ENCODE measurements at regions of chr12 and their contacts with region 1.

Region 1: GRCh38 chr12:96061864-96062453 is 26.6 kb upstream of the LTA4H start:
- DNase-seq: peak; percentile 81 to 90 (median 85)
- H3K4me3 ChIP-seq: no peak overlapping the region
- H3K4me3 Mint-ChIP-seq: no peak overlapping the region
- H3K27ac ChIP-seq: peak overlapping the region in 1 of 2 donors; percentile 39
- H3K27ac Mint-ChIP-seq: peak overlapping the region; percentile 19 to 82 (median 75)
- H3K4me1 ChIP-seq: peaks cover 23 to 33% of the 10 kb centered on the region in 2 donors
- H3K4me1 Mint-ChIP-seq: peaks cover 32% of the 10 kb centered on the region
- H3K27me3 ChIP-seq: no peaks in the 10 kb centered on the region
- H3K27me3 Mint-ChIP-seq: no peaks in the 10 kb centered on the region
- CTCF ChIP-seq: peak; percentile 91

Region 2: DNA sequence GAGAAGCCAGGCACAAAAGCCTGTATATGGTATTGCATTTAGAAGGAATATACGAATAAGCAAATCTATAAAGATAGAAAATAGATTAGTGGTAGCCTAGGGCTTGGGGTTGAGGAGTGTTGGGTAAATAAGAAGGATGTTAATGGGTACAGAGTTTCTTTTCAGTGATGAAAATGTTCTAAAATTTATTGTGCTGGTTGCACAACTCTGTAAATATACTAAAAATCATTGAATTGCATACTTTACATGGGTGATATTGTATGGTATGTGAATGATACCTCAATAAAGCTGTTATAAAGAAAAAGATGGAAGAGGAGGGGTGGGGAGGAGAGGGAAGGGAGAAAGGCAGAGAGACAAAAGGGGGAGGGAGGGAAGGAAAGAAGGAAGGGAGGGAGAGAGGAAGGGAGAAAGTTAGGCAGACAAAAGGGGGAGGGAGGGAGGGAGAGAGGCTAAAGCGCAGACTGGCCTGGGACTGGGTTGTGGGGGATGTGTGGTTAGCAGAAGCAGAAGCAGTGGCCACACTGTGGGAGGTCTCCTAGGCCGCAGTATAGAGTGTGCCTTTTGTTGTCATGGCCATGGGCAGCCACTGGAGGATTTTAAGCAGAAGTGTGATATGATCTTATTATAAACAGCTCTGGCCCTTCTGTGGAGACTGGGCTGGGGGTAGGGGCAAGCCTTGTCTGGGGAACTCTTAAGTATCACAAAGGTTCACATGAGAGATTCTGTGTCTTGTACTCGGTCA is 58.6 kb after region 1 on chr12:
- intact Hi-C with region 1: loop called in 1 of 2 experiments (anchors 5 kb)
- DNase-seq: peak; percentile 64 to 74 (median 74)
- H3K4me3 ChIP-seq: peak overlapping the region in 1 of 3 experiments; percentile 67
- H3K4me3 Mint-ChIP-seq: peak overlapping the region; percentile 65 to 68
- H3K27ac ChIP-seq: peak overlapping the region; percentile 72 to 93
- H3K27ac Mint-ChIP-seq: peak overlapping the region; percentile 93 to 99 (median 97)
- H3K4me1 ChIP-seq: peaks cover 20 to 27% of the 10 kb centered on the region in 2 donors
- H3K4me1 Mint-ChIP-seq: peaks cover 33% of the 10 kb centered on the region
- H3K27me3 ChIP-seq: no peaks in the 10 kb centered on the region
- H3K27me3 Mint-ChIP-seq: peaks cover 0 to 1% (median 0%) of the 10 kb centered on the region in 3 donors
- CTCF ChIP-seq: peak; percentile 39

Region 3: DNA sequence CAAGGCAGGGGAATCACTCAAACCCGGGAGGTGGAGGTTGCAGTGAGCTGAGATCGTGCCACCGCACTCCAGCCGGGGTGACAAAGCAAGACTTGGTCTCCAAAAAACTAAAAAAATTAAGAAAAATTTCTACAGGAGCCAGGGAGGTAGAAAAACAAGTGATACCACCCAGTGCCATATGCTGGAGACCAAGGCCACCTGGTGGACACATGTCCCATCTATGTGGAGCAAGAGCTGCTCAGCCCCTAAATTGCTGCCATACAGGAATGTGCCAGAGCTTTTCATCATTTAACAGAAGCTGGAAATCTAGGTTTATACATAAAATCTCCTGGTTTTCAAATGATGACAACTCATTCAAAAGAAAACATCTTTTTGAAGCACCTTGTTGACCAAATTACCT is 70.9 kb after region 1 on chr12:
- intact Hi-C with region 1: loop called in 1 of 2 experiments (anchors 5 kb)
- DNase-seq: peak; percentile 18 to 41 (median 23)
- H3K4me3 ChIP-seq: no peak overlapping the region
- H3K4me3 Mint-ChIP-seq: no peak overlapping the region
- H3K27ac ChIP-seq: no peak overlapping the region
- H3K27ac Mint-ChIP-seq: no peak overlapping the region
- H3K4me1 ChIP-seq: peaks cover 15 to 21% of the 10 kb centered on the region in 2 donors
- H3K4me1 Mint-ChIP-seq: peaks cover 32% of the 10 kb centered on the region
- H3K27me3 ChIP-seq: no peaks in the 10 kb centered on the region
- H3K27me3 Mint-ChIP-seq: peaks cover 0 to 5% (median 0%) of the 10 kb centered on the region in 3 donors
- CTCF ChIP-seq: peak; percentile 58

Region 4: DNA sequence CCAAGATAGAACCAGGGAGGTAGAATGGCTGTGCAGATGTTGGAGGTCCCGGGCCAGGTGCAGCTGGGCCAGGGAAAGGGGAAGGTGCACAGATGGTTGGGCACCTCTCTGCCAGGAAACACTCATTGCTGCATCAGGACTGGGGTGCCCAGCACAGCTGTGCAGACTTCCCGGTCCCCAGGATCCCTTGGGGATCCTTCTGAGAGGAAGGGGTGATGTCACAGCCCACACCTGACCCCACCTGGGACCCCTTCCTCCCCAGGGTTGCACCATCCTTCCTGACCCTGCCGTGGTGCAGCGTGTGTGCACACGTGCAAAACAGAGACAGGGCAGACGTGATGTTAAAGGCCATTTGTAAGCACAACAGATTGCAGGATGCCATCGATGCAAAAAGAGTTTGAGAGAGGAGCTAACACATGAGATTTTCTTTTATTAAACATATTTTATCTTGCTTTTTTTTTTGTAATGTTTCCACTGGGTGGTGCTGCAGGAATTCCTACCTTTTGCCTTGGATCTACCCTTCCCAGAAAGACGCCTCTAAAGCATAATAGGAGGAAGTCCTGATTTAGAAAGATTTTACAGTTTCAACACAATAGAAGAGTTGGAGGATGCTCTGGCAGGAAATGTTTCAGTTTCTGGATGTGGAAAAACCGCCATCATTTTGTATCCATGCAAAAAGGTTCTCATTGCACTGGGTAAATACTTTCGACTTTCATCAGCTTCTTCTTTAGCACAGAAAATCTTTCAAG is 147.0 kb after region 1 on chr12:
- intact Hi-C with region 1: loop called in 1 of 2 experiments (anchors 5 kb)
- DNase-seq: no peak
- H3K4me3 ChIP-seq: no peak overlapping the region
- H3K4me3 Mint-ChIP-seq: peak overlapping the region in 1 of 2 donors; percentile 73
- H3K27ac ChIP-seq: peak overlapping the region in 1 of 2 donors; percentile 50
- H3K27ac Mint-ChIP-seq: peak overlapping the region in 5 of 7 donors; percentile 2 to 77 (median 52)
- H3K4me1 ChIP-seq: peaks cover 37 to 51% of the 10 kb centered on the region in 2 donors
- H3K4me1 Mint-ChIP-seq: peaks cover 75% of the 10 kb centered on the region
- H3K27me3 ChIP-seq: no peaks in the 10 kb centered on the region
- H3K27me3 Mint-ChIP-seq: no peaks in the 10 kb centered on the region
- CTCF ChIP-seq: no peak

Region 5: DNA sequence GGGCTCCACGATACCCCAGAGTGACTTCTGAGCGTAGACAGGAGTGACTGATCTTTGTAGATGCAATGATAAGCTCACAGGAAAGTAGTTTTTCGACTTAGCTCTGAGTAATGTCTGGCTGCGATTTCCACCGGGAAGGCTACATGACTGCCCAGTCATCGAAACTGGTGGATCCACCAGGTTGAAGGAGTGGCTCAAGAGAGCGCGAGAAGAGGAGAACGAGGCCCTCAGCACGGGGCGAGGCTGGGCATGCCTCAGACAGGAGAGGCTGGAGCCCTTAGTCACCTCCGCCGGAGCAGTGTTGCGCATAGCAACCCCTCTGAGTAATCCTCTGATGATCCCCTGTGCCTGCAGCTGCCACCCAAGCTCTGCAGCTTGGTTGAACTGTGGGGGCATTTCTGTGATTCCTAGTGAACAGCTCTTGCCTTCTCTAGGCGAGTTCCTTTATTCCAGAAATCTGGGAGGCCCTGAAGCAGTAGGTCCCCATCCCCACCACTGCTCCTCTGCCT is 157.8 kb after region 1 on chr12:
- intact Hi-C with region 1: loop called (anchors 1 to 5 kb)
- DNase-seq: no peak
- H3K4me3 ChIP-seq: no peak overlapping the region
- H3K4me3 Mint-ChIP-seq: no peak overlapping the region
- H3K27ac ChIP-seq: no peak overlapping the region
- H3K27ac Mint-ChIP-seq: peak overlapping the region in 6 of 7 donors; percentile 10 to 82 (median 72)
- H3K4me1 ChIP-seq: peaks cover 8 to 10% of the 10 kb centered on the region in 2 donors
- H3K4me1 Mint-ChIP-seq: peaks cover 9% of the 10 kb centered on the region
- H3K27me3 ChIP-seq: no peaks in the 10 kb centered on the region
- H3K27me3 Mint-ChIP-seq: peaks cover 0 to 2% (median 0%) of the 10 kb centered on the region in 3 donors
- CTCF ChIP-seq: no peak

Region 6: DNA sequence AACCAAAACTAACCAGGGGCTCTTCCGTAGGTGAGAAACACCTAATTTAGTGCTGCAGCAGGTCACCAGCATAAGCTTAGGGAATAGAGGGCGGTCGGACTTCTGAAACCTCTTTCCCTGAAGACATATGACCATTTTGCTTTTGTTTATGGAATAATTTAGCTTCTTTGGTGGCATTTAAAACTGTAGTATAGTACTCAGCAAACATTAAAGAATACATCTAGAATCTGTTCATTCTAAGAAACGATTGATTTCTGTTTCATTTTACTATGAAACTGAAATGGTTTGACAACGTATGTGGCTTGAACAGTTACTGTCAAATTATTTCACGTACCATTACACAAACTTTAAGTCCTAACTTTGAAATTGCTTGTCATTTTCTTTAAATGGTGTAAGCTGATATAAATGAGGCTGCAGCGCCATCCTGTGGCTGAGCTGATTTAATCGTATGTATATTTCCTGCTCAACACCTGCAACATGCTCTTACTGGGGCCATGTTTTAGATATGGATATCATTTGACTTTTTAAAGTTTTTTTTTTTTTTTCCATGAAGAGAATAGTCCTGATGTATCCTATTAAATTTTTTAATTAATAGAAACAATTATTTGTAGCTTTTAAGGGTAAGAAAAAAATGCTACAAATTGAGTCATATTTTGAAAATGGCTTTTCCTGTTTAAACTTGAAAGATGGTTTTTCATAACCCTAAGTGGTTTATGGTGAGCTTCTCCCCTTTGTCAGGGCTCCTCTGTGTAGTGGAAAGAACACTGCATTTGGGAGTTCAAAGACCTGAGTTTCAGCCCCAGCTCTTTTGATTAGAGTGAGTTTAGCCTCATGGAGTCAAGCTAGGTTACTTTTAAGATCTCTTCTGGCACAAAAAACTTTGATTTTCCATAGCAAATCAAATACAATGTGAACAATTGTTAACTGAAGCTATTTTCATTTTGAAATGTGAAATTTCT is 454.8 kb after region 1 on chr12:
- intact Hi-C with region 1: loop called (anchors 2 to 5 kb)
- DNase-seq: peak; percentile 60 to 83 (median 71)
- H3K4me3 ChIP-seq: no peak overlapping the region
- H3K4me3 Mint-ChIP-seq: no peak overlapping the region
- H3K27ac ChIP-seq: no peak overlapping the region
- H3K27ac Mint-ChIP-seq: no peak overlapping the region
- H3K4me1 ChIP-seq: no peaks in the 10 kb centered on the region
- H3K4me1 Mint-ChIP-seq: no peaks in the 10 kb centered on the region
- H3K27me3 ChIP-seq: no peaks in the 10 kb centered on the region
- H3K27me3 Mint-ChIP-seq: peaks cover 0 to 1% (median 0%) of the 10 kb centered on the region in 3 donors
- CTCF ChIP-seq: peak; percentile 85

Measured in CD14-positive monocyte (primary cell).